Cardiac septum (tissue), 1 donor: ENCODE measurements at regions of chr3 and their contacts with region 1.

Region 1: GRCh38 chr3:66179793-66180192 is 41.0 kb upstream of the SLC25A26 start:
- DNase-seq: no peak

Region 2: GRCh38 chr3:66153481-66154443 is 26.0 kb before region 1 on chr3:
- intact Hi-C with region 1: loop called (anchors 2 kb)
- DNase-seq: no peak